Activated naive CD8-positive, alpha-beta T cell treated with anti-CD3 and anti-CD28 coated beads, Interleukin-2, amount 10 ng/mL, durations not matched to agents 7 days and 5 days (primary cell): ENCODE measurements at regions of chr1 and their contacts with region 1.

Region 1: DNA sequence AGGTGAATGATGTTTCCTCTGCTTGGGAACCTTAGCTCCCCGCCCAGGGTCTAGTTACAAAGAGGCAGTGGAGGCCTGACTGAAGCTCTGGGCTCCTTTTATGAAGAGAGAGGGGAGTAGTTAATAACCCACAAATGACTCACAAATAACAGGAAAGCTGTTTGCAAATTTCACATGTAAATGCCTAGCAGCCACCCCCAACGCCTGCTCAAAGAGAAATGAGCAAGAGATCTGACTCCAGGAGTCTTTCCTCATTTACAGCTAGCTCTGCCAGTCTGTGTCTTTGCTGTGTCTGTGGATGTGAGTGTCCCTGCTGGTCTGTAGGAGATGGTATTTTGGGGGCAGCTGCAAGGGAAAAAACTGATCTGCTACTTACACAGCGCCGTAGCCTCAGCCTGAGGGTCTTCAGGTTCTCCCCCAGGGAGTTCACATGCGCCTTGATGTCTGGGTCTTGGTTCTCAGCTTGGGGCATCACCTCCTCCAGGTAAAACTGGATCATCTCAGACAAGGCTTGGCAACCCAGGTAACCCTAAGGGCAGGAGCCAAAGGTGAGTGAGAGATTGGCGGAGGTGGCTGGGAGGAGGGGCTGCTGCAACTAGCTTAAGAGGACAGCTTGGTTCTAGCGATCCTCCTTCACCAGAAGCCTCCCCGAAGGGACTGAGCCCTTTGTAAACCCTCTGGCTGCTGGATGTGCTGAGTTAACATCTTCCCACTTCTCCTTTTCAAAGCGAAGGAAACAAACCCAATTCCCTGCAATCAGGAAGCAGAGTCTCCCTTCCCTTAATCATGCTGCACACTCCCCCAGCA is at the start of gene IL19:
- DNase-seq: no peak
- ATAC-seq: no peak
- H3K4me3 Mint-ChIP-seq: peak within 1 kb of the TSS; percentile 20
- H3K27ac Mint-ChIP-seq: peak within 1 kb of the TSS; percentile 59
- H3K4me1 Mint-ChIP-seq: peaks cover 74% of the 10 kb centered on the region
- H3K27me3 Mint-ChIP-seq: peaks cover 38% of the 10 kb centered on the region
- total RNA-seq, gene IL19: not detected

Region 2: DNA sequence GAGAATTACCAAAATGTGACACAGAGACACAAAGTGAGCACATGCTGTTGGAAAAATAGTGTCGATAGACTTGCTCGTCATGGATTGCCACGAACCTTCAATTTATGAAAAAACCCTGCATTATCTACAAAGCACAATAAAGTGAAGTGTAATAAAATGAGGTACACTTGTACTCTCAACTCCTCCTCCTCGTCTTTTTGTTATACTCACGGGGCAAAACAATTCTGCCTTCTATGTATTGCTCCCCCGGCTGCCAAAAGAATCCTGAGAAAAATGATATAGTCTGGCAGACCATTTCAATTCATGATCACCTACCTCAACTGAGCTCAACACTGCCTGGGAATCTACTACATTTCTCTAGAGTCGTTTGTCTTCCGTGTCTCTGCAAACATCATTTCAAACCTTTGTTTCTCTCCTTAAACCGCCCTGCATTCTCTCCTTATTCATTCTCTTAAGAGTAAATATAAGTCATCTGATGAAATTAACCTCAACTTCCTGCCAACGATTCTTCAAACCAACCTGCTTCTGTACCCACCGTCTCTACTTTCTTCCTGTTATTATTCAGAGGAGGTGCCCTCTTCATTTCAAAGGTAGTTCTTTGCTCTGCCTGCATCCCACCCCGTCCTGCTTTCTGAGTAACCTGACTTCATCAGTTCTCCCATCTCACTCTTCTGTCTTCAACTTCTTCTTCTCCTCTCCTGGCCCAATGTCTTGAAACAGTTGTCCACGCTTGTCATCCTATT is 13.0 kb before region 1 on chr1:
- POLR2A ChIA-PET with region 1: interaction called, 10 read pairs
- DNase-seq: no peak
- ATAC-seq: peak; percentile 87
- H3K4me3 Mint-ChIP-seq: no peak overlapping the region
- H3K27ac Mint-ChIP-seq: no peak overlapping the region
- H3K4me1 Mint-ChIP-seq: peaks cover 19% of the 10 kb centered on the region
- H3K27me3 Mint-ChIP-seq: peaks cover 6% of the 10 kb centered on the region

Region 3: DNA sequence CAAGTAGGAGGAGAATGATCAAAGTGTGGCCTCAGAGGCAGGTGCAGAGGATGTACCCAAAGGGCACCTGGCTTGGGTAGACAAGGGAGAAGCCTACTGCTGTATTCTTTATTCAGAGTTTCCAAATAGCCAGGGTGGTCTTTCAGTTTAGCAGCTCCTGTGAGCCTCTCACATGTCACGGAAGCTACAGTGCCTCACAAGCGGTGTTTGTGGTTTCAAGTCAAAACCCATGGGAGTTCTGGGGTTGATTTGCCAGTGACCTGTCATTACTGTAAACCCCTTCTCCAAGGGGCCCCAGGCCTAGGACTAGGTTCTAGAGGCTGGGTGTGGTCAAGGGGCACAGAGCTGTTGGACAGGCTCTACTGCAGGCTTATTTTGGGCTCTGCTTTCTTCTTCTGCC is 11.7 kb after region 1 on chr1:
- POLR2A ChIA-PET with region 1: interaction called, 16 read pairs
- DNase-seq: no peak
- ATAC-seq: peak; percentile 37
- H3K4me3 Mint-ChIP-seq: peak overlapping the region; percentile 29
- H3K27ac Mint-ChIP-seq: no peak overlapping the region
- H3K4me1 Mint-ChIP-seq: peaks cover 51% of the 10 kb centered on the region
- H3K27me3 Mint-ChIP-seq: peaks cover 3% of the 10 kb centered on the region

Region 4: DNA sequence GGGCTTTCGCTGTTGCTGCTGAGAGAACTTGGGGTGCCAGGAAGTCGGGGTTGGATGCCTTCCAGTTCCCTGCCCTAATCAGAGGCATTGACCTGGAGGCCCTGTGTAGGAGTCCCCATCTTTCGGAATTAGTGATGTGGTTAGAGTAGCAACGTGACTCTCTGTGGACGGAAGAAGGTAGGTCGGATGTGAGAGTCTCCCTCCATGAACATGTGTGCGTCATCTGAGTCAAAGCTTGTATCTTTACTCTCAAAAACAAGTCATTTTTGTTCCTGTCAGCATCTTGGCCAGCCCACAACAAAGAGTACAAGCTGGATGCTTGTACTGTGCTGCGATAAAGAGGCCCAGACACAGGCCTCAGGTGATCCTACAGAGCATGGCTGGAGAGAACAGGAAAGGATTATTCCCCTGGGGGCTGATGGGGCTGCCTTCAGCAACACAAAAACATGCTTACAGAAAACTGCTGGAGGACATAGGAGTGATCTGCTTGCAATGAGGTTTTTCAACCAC is 32.5 kb after region 1 on chr1:
- POLR2A ChIA-PET with region 1: interaction called, 14 read pairs
- DNase-seq: peak; percentile 59
- ATAC-seq: peak; percentile 96
- H3K4me3 Mint-ChIP-seq: peak overlapping the region; percentile 32
- H3K27ac Mint-ChIP-seq: peak overlapping the region; percentile 82
- H3K4me1 Mint-ChIP-seq: peaks cover 53% of the 10 kb centered on the region
- H3K27me3 Mint-ChIP-seq: peaks cover 15% of the 10 kb centered on the region

Region 5: DNA sequence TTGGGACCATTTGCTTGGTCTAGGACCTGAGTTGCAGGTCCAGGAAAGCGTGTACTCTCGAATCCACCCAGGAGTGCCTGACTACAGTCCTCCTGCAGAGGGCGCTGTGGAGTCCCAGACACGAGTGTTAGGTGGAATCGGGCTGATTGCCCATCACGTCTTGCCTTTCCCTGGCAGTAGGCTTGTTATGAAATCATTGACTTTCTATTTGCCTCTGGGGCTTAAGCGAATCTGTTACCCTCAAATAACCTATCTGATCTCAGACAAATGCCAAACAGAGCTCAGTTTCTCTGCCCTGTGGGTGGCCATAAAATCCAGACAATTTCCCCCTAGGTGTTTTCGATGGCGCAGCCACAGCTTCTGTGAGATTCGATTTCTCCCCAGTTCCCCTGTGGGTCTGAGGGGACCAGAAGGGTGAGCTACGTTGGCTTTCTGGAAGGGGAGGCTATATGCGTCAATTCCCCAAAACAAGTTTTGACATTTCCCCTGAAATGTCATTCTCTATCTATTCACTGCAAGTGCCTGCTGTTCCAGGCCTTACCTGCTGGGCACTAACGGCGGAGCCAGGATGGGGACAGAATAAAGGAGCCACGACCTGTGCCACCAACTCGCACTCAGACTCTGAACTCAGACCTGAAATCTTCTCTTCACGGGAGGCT is 94.4 kb after region 1 on chr1 and contains the start of gene IL20:
- POLR2A ChIA-PET with region 1: no interaction called
- DNase-seq: peak; percentile 83
- ATAC-seq: peak; percentile 79
- H3K4me3 Mint-ChIP-seq: no peak within 1 kb of the TSS
- H3K27ac Mint-ChIP-seq: no peak within 1 kb of the TSS
- H3K4me1 Mint-ChIP-seq: peaks cover 2% of the 10 kb centered on the region
- H3K27me3 Mint-ChIP-seq: peaks cover 35% of the 10 kb centered on the region
- total RNA-seq, gene IL20: not detected

Region 6: DNA sequence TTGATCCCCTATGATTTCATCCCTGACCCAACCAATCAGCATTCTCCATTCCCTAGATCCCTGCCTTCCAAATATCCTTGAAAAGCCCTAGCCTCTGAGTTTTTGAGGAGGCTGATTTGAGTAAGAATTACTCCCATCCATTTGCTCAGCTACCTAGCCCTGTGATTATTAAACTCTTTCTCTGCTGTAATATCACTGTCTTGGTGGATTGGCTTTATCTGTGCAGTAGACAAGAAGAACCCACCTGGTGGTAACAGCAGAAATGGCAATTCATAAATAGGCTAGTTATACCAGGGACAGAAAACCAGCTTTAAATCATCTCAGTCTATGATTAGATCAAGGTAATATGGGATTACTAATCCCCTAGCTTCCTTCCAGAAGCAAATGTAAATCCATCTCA is 107.7 kb after region 1 on chr1:
- POLR2A ChIA-PET with region 1: no interaction called
- DNase-seq: no peak
- ATAC-seq: no peak
- H3K4me3 Mint-ChIP-seq: no peak overlapping the region
- H3K27ac Mint-ChIP-seq: no peak overlapping the region
- H3K4me1 Mint-ChIP-seq: no peaks in the 10 kb centered on the region
- H3K27me3 Mint-ChIP-seq: no peaks in the 10 kb centered on the region